Activated B cell treated with CpG ODN at 0.5 μM for 24 hours (primary cell): ENCODE measurements at regions of chr1 and their contacts with region 1.

Region 1: DNA sequence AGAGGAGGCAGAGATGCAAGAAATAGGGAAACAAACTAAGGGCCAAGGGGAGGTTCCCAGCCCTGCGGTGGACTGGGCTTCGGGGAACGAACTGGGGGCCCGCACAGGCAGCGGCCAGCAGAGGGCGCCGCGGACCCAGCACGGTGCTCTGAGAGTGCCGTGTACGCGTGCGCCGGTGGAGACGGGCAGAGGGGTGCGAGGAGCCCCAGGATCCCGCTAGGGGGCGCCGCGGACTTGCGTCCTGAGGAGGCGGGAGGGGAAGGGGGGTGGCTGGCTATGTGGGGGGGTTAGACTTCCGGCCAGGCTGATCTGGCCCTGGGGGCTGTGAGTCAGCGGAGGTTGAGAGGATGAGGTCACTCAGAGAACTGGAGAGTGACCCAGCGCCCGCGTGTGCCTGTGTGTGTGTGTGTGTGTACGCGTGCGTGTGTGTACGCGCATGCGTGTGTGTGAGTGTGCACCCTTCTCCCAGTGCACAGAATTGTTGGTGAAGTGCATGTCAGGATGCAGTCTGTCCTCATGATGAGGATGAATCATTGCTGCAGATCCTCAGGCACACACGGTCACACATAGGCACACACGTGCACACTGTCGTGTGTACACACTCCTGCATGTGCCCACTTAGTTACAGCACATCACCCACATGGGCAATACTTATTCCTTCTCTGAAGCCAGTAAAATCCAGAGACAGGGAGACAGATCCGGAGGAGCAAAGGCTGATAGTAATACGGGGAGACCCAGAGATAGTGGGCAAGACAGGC is 17.0 kb downstream of the NES start:
- DNase-seq: peak; percentile 87
- ATAC-seq: peak; percentile 85
- H3K4me3 Mint-ChIP-seq: peak overlapping the region; percentile 62
- H3K27ac Mint-ChIP-seq: peak overlapping the region; percentile 63
- H3K4me1 Mint-ChIP-seq: peaks cover 90% of the 10 kb centered on the region
- H3K27me3 Mint-ChIP-seq: peaks cover 22% of the 10 kb centered on the region
- CTCF ChIP-seq: peak; percentile 66

Region 2: DNA sequence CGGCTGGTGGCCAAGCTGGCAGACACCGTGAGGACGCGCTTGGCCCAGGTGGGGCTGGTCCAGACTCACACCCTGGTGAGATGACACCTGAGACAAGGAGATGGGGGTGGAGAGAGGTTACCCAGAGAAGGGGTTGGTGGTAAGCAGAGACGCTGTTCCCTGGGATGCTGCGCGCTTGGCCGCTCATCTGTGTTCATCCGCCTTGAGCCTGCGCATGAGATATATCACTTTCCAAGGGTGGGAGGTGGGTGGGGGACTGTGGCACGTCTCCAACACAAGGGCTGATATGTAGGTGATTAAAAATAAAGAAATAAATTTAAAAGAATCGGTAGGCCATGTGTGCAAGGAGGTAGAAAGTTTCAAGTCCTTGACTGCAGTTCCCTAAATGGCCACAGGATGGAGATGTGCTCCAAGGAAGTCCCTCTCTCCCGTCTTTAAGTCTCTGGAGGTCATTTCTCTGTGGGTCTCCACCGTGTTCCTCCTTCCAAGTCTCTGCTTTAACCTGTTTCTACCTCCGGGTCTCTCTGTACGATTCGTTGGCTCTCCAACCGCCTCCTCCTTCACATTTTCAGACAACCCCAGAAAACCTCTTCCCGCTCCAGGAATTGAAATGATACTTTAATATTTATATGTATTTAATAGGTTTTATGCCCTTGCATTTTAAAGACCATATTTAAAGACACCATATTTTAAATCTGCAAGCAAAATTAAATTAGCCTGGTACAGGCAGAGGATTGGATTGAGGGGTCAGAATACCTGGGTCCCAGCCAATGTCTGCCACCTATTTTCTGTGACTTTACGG is 76.2 kb before region 1 on chr1:
- CTCF ChIA-PET with region 1: no interaction called
- POLR2A ChIA-PET with region 1: no interaction called
- intact Hi-C with region 1: loop called (anchors 2 kb)
- DNase-seq: no peak
- ATAC-seq: peak; percentile 54
- H3K4me3 Mint-ChIP-seq: peak overlapping the region; percentile 53
- H3K27ac Mint-ChIP-seq: peak overlapping the region; percentile 99
- H3K4me1 Mint-ChIP-seq: peaks cover 33% of the 10 kb centered on the region
- H3K27me3 Mint-ChIP-seq: no peaks in the 10 kb centered on the region
- CTCF ChIP-seq: no peak

Region 3: DNA sequence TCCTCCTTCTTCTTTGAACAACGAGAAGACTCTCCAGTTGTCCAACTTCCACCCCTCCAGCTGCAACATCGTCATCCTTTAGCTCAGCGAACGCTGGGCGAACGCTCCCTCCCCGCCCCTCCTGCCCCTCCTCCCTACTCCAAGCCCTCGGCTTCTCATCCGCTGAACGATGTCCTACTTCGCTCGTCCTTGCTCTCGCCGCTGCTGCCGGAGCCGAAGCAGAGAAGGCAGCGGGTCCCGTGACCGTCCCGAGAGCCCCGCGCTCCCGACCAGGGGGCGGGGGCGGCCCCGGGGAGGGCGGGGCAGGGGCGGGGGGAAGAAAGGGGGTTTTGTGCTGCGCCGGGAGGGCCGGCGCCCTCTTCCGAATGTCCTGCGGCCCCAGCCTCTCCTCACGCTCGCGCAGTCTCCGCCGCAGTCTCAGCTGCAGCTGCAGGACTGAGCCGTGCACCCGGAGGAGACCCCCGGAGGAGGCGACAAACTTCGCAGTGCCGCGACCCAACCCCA is 18.4 kb before region 1 on chr1 and contains the start of gene BCAN:
- CTCF ChIA-PET with region 1: interaction called, 6 read pairs
- POLR2A ChIA-PET with region 1: no interaction called
- intact Hi-C with region 1: loop called (anchors 1 kb)
- DNase-seq: no peak
- ATAC-seq: peak; percentile 51
- H3K4me3 Mint-ChIP-seq: peak within 1 kb of the TSS; percentile 68
- H3K27ac Mint-ChIP-seq: no peak within 1 kb of the TSS
- H3K4me1 Mint-ChIP-seq: peaks cover 20% of the 10 kb centered on the region
- H3K27me3 Mint-ChIP-seq: peaks cover 78% of the 10 kb centered on the region
- CTCF ChIP-seq: no peak
- total RNA-seq, gene BCAN: 0.27 and 0.51 TPM in 2 replicates

Region 4: GRCh38 chr1:156705918-156706656 is 45.9 kb after region 1 on chr1:
- CTCF ChIA-PET with region 1: no interaction called
- POLR2A ChIA-PET with region 1: no interaction called
- intact Hi-C with region 1: loop called (anchors 1 kb)
- DNase-seq: peak; percentile 62
- ATAC-seq: peak; percentile 60
- H3K4me3 Mint-ChIP-seq: peak overlapping the region; percentile 82
- H3K27ac Mint-ChIP-seq: no peak overlapping the region
- H3K4me1 Mint-ChIP-seq: peaks cover 28% of the 10 kb centered on the region
- H3K27me3 Mint-ChIP-seq: peaks cover 21% of the 10 kb centered on the region
- CTCF ChIP-seq: peak; percentile 29